ENCODE measurements at regions of chr1 and their contacts with region 1.

Region 1: DNA sequence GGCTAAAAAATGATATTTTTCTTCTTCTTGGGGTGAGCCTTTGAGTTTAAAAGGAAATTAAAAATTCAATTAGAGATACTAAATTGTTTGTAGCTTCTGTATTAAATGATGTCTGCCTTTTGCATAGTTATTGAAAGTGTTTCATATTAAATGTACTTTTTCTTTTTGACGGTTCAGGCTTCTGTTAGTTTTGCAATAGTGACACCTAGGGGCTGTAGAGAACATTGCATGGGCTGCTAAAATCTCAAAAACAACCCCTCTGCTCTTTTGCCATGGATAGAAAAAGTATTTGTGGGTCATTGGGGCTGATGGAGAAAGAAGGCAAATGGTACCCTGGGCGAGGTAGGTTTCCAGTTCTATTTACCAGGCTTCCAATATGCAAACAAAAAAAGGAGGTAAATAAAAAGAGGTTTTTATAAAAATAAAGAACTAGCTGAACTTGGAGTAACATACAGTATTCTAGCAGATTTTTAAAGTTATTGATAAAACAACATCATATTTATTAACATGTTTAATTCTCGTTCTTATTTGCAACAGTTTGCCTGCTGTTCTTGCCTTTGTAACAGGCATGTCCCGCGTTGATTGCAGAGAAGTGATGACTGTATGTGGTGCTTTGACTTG is 115.4 kb upstream of the HOOK1 start:
- DNase-seq: no peak
- ATAC-seq: peak; percentile 56 to 68 (median 65)
- H3K4me3 ChIP-seq: peak overlapping the region; percentile 59
- H3K27ac ChIP-seq: peak overlapping the region; percentile 87
- H3K4me1 ChIP-seq: peaks cover 58% of the 10 kb centered on the region
- H3K27me3 ChIP-seq: no peaks in the 10 kb centered on the region
- CTCF ChIP-seq: peak; percentile 96

Region 2: GRCh38 chr1:58903514-58904298 is 795.6 kb before region 1 on chr1:
- intact Hi-C with region 1: loop called in 1 of 2 experiments (anchors 10 kb)
- DNase-seq: peak; percentile 95 to 97
- ATAC-seq: peak; percentile 90 to 94 (median 92)
- H3K4me3 ChIP-seq: peak overlapping the region; percentile 72
- H3K27ac ChIP-seq: peak overlapping the region; percentile 95
- H3K4me1 ChIP-seq: peaks cover 59% of the 10 kb centered on the region
- H3K27me3 ChIP-seq: no peaks in the 10 kb centered on the region
- CTCF ChIP-seq: no peak

Region 3: DNA sequence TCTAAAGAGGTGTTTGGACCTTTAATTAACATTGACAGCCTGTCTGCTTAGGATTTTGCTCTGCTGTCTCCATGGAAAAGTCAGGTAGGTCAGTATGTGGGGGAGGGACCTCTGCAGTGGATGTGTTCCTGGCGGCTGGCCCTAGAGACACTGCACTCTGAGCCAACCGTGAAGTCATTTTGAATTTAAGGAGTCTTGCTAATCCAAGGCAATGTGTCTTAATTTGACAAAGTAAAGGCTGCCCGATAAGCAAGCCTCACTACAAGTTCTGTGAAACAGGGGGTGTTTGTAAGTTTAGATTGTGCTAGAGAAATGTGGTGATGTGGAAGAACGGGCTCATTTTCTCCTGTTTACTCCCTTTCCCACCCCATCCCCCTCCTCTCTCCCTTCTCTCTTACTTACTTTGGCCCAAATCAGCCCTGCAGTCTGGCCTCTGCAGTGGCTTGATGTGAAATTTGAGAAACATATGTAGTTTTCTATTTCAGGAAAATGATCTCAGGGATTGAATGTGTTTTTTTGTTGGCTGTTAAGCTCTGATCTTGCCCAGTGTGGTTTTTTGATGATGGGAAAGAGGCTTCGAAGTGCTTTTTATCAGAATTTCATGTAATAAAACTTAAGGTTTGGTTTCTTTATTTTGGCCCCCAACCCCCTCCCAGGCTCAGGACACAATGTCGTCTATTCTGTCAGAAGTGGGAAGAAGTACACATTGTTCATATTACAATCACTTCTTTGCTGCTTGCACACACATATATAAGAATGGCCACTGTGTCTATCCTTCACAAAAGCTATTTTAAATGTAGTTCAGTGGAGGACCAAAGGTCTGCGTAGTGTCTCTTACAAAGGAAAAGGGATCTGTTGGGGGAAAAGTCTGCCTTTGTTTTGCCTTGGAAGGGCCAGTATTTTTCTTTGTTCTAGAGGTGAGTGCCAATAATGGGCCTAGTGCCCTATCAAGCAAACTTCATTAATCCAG is 305.8 kb before region 1 on chr1:
- intact Hi-C with region 1: loop called in 1 of 2 experiments (anchors 10 kb)
- DNase-seq: peak; percentile 77 to 91
- ATAC-seq: peak; percentile 92 to 96 (median 94)
- H3K4me3 ChIP-seq: peak overlapping the region; percentile 49
- H3K27ac ChIP-seq: peak overlapping the region; percentile 93
- H3K4me1 ChIP-seq: peaks cover 69% of the 10 kb centered on the region
- H3K27me3 ChIP-seq: no peaks in the 10 kb centered on the region
- CTCF ChIP-seq: no peak

Region 4: GRCh38 chr1:59422921-59423575 is 276.3 kb before region 1 on chr1:
- intact Hi-C with region 1: loop called (anchors 5 to 10 kb)
- DNase-seq: peak; percentile 74
- ATAC-seq: peak; percentile 32 to 45 (median 41)
- H3K4me3 ChIP-seq: no peak overlapping the region
- H3K27ac ChIP-seq: peak overlapping the region; percentile 90
- H3K4me1 ChIP-seq: peaks cover 74% of the 10 kb centered on the region
- H3K27me3 ChIP-seq: no peaks in the 10 kb centered on the region
- CTCF ChIP-seq: no peak

Region 5: DNA sequence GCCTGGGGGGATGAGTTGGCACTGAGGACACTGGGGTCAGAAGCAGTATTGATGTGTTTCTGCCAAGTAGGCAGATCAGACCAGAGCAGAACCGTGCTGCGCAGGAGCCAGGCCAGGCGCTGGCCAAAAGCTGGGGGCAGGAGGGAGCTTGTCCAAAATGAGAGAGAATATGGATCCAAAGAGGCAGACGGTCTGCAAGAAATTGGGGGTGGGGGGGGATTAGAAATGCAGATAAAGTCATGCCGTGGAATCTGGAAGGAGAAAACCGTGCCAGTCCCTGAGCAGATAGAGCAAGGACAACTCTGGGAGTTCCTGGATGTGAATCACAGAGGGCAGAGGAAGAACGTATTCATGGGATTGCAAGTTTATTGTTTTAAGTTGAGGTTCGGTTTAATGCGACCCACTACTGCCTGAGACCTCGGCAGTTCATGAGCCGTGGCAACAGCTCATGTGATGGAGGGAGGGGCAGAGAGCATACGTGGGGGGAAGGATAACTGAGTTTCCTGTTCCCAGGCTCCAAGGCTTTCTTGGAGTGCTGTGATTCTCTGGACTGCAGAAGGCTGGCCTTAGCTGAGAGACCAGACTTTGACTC is 178.4 kb before region 1 on chr1:
- intact Hi-C with region 1: loop called in 1 of 2 experiments (anchors 5 kb)
- DNase-seq: no peak
- ATAC-seq: peak; percentile 48 to 62 (median 56)
- H3K4me3 ChIP-seq: no peak overlapping the region
- H3K27ac ChIP-seq: peak overlapping the region; percentile 86
- H3K4me1 ChIP-seq: peaks cover 34% of the 10 kb centered on the region
- H3K27me3 ChIP-seq: no peaks in the 10 kb centered on the region
- CTCF ChIP-seq: no peak

Region 6: DNA sequence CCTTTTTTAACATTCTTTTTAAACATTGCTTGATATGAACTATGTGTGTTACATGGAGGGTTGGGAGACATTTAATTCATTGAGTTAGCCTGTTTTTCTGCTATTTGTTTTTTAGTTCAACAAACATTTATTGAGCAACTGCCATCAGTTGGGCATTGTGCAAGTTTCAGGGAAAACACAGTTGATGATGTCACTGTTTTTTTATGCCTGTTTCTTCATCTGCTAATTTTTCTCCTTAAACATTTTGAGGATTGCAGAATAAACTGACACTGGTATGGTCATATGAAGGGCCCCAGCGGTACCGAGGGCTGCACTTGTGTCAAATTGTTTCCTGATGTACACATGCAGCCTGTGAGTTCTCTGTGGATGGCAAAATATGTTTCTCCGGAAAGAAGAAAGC is 149.4 kb before region 1 on chr1:
- intact Hi-C with region 1: no loop called
- DNase-seq: peak in 1 of 2 donors; percentile 30
- ATAC-seq: peak in 1 of 4 donors; percentile 35
- H3K4me3 ChIP-seq: no peak overlapping the region
- H3K27ac ChIP-seq: peak overlapping the region; percentile 28
- H3K4me1 ChIP-seq: peaks cover 38% of the 10 kb centered on the region
- H3K27me3 ChIP-seq: no peaks in the 10 kb centered on the region
- CTCF ChIP-seq: no peak

Measured in psoas muscle (tissue), 8 donors.